Activated CD4-positive, alpha-beta T cell treated with anti-CD3 and anti-CD28 coated beads, Interleukin-2, amount 10 ng/mL, durations not matched to agents 7 days and 5 days (primary cell): ENCODE measurements at regions of chr9 and their contacts with region 1.

Region 1: GRCh38 chr9:137423004-137423874 is at the starts of genes EXD3 and NOXA1:
- DNase-seq: peak; percentile 94
- H3K4me3 Mint-ChIP-seq: peak within 1 kb of the TSS; percentile 81
- H3K27ac Mint-ChIP-seq: peak within 1 kb of the TSS; percentile 75
- H3K4me1 Mint-ChIP-seq: peaks cover 12% of the 10 kb centered on the region
- H3K27me3 Mint-ChIP-seq: peaks cover 11% of the 10 kb centered on the region
- total RNA-seq, gene EXD3: 10.3 to 13.2 TPM
- total RNA-seq, gene NOXA1: 0.46 to 1.1 TPM

Region 2: GRCh38 chr9:137370865-137371520 is 52.2 kb before region 1 on chr9:
- CTCF ChIA-PET with region 1: no interaction called
- POLR2A ChIA-PET with region 1: no interaction called
- DNase-seq: no peak
- H3K4me3 Mint-ChIP-seq: no peak overlapping the region
- H3K27ac Mint-ChIP-seq: no peak overlapping the region
- H3K4me1 Mint-ChIP-seq: no peaks in the 10 kb centered on the region
- H3K27me3 Mint-ChIP-seq: no peaks in the 10 kb centered on the region

Region 3: GRCh38 chr9:137411671-137412380 is 11.4 kb before region 1 on chr9:
- CTCF ChIA-PET with region 1: interaction called, 10 read pairs
- POLR2A ChIA-PET with region 1: no interaction called
- DNase-seq: peak; percentile 26
- H3K4me3 Mint-ChIP-seq: no peak overlapping the region
- H3K27ac Mint-ChIP-seq: no peak overlapping the region
- H3K4me1 Mint-ChIP-seq: peaks cover 17% of the 10 kb centered on the region
- H3K27me3 Mint-ChIP-seq: no peaks in the 10 kb centered on the region

Region 4: DNA sequence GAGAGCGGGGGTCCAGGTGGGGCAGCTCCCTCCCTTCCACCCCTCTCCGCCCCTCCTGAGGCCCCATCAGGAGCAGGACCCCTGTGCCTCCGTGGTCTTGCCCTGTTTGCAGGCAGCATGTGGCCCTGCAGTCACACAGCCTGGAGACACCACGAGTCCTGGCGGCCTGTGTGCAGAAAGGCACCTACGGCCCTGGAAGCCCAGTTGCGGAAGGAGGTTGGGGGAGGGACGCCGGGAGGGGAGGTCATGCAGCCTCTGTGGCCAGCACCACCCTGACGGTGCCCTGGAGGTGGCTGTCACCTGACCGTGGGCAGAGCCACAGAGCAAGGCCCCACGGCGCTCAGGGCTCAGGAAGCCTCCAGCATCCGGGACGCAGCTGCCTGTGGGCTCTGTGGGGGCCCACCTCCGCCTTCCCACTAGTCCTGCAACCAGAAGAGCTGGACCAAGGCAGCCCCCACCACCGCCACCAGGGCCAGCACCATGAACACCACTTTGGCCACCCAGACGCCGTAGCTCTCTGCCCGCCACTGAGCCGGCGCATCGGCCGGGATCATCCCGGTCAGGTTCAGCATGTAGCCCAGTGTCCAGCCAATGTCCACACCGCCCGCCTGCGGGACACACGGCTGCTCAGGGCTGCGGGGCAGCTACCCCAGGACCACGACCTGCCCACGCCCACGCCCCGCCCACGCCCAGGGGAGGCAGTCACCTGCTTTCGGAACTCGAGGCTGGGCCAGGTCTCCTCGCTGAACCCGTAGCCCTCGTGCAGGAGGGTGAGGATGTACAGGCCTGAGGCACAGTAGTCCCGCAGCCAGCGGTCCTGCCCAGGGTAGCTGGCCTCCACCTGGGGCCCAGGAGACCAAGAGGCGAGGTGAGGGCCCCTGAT is 11.5 kb after region 1 on chr9:
- CTCF ChIA-PET with region 1: interaction called, 13 read pairs
- POLR2A ChIA-PET with region 1: no interaction called
- DNase-seq: no peak
- H3K4me3 Mint-ChIP-seq: no peak overlapping the region
- H3K27ac Mint-ChIP-seq: no peak overlapping the region
- H3K4me1 Mint-ChIP-seq: peaks cover 2% of the 10 kb centered on the region
- H3K27me3 Mint-ChIP-seq: peaks cover 4% of the 10 kb centered on the region

Region 5: GRCh38 chr9:137444106-137444790 is 21.0 kb after region 1 on chr9:
- CTCF ChIA-PET with region 1: interaction called, 10 read pairs
- POLR2A ChIA-PET with region 1: no interaction called
- DNase-seq: no peak
- H3K4me3 Mint-ChIP-seq: no peak overlapping the region
- H3K27ac Mint-ChIP-seq: no peak overlapping the region
- H3K4me1 Mint-ChIP-seq: peaks cover 13% of the 10 kb centered on the region
- H3K27me3 Mint-ChIP-seq: peaks cover 17% of the 10 kb centered on the region